ENCODE measurements at regions of chr14 and their contacts with region 1.

Region 1: DNA sequence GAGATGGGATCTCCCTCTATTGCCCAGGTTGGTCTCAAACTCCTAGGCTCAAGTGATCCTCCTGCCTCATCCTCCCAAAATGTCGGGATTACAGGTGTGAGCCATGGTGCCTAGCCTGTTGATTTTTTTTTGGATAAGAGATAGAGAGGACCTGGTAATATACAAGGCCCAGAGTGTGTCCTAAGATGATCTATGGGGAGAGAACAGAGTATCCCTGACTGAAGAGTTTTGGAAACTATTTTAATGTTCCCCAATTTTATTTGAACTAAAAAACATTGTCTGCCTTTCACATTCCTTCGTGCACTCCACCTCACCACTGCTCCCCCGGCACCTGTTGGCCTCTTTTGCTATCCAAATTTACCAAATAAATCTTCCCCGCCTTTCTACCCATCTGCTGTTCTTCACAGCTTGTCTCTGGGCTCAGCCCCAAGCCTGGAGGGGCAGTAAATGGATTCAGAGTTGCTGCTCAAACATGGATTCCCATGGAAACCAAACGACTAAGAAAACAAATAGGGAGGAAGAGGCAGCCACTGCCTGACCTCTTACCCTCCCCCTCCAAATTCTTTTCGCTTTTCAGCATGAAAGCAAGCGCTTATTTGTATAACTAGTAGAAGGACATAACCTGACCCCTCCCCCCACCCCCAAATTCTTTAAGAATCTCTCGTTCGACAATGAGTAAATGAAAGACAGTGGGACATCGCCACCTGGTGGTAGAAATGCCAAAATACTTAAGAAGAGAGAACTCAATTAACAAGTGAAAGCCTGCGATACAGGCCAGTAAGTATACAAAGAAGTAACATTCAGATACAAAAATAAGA is 22.6 kb downstream of the OR10G3 start:
- DNase-seq: peak; percentile 87
- ATAC-seq: peak; percentile 68
- H3K4me3 Mint-ChIP-seq: no peak overlapping the region
- H3K27ac Mint-ChIP-seq: no peak overlapping the region
- H3K4me1 Mint-ChIP-seq: peaks cover 4% of the 10 kb centered on the region
- H3K27me3 Mint-ChIP-seq: no peaks in the 10 kb centered on the region

Region 2: GRCh38 chr14:21241218-21241819 is 316.0 kb before region 1 on chr14:
- CTCF ChIA-PET with region 1: no interaction called
- POLR2A ChIA-PET with region 1: no interaction called
- intact Hi-C with region 1: loop called in 1 of 2 experiments (anchors 2 kb)
- DNase-seq: no peak
- ATAC-seq: no peak
- H3K4me3 Mint-ChIP-seq: no peak overlapping the region
- H3K27ac Mint-ChIP-seq: peak overlapping the region; percentile 75
- H3K4me1 Mint-ChIP-seq: peaks cover 77% of the 10 kb centered on the region
- H3K27me3 Mint-ChIP-seq: no peaks in the 10 kb centered on the region

Region 3: DNA sequence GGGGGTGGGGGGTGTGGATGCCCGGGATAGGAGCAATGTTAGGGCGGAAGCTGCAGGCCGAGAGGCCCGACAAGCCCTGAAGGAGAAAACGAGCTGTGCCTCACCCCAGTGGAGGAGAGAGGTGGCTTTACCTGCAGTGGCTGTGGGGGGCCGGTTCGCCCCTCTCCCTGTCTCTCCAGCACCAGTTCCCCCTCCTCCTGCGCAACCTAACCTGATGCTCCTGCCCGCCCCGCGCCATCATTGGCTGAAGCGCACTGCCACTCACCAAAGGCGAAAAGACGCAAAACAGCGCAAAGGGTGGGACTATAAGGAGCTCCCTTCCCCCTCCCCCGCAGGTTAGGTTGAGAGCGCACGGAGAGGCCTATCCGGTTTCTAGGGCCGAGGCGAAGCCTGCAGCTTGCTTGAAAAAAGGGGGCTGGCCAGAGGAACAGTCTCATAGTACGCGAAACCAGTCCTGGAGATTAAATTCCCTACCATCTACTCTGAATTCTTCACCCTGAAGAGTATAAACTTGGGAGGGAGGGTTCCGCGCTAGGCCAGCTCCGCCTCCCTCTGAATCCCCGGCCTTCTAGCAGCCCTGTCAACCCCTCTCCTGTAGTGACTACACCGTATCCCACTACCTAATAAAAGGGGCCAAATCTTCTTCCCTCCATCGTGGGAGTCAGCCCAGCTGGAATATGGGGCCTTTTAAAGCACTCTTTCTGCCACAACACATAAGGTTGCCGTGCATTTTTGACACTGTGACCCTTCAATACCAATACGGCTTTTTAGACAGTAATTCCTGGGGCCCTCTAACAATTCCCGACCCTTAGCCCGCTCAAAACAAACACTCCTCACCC is 120.0 kb before region 1 on chr14:
- CTCF ChIA-PET with region 1: interaction called, 4 read pairs
- POLR2A ChIA-PET with region 1: no interaction called
- intact Hi-C with region 1: loop called in 1 of 2 experiments (anchors 1 kb)
- DNase-seq: peak; percentile 99
- ATAC-seq: peak; percentile 99
- H3K4me3 Mint-ChIP-seq: peak overlapping the region; percentile 95
- H3K27ac Mint-ChIP-seq: peak overlapping the region; percentile 87
- H3K4me1 Mint-ChIP-seq: peaks cover 57% of the 10 kb centered on the region
- H3K27me3 Mint-ChIP-seq: no peaks in the 10 kb centered on the region

Region 4: GRCh38 chr14:21498553-21499526 is 58.5 kb before region 1 on chr14:
- CTCF ChIA-PET with region 1: interaction called, 49 read pairs
- POLR2A ChIA-PET with region 1: interaction called, 3 read pairs
- intact Hi-C with region 1: loop called (anchors 1 kb)
- DNase-seq: peak; percentile 22
- ATAC-seq: peak; percentile 78
- H3K4me3 Mint-ChIP-seq: no peak overlapping the region
- H3K27ac Mint-ChIP-seq: peak overlapping the region; percentile 64
- H3K4me1 Mint-ChIP-seq: peaks cover 23% of the 10 kb centered on the region
- H3K27me3 Mint-ChIP-seq: no peaks in the 10 kb centered on the region

Region 5: GRCh38 chr14:21525962-21526671 is 31.2 kb before region 1 on chr14 and contains the start of gene SALL2:
- CTCF ChIA-PET with region 1: interaction called, 4 read pairs
- POLR2A ChIA-PET with region 1: no interaction called
- intact Hi-C with region 1: loop called in 1 of 2 experiments (anchors 2 kb)
- DNase-seq: peak; percentile 87
- ATAC-seq: peak; percentile 87
- H3K4me3 Mint-ChIP-seq: peak within 1 kb of the TSS; percentile 71
- H3K27ac Mint-ChIP-seq: peak within 1 kb of the TSS; percentile 72
- H3K4me1 Mint-ChIP-seq: peaks cover 16% of the 10 kb centered on the region
- H3K27me3 Mint-ChIP-seq: no peaks in the 10 kb centered on the region
- total RNA-seq, gene SALL2: 5.5 to 6.3 TPM

Region 6: GRCh38 chr14:21572604-21573003 is 15.3 kb after region 1 on chr14:
- CTCF ChIA-PET with region 1: interaction called, 7 read pairs
- POLR2A ChIA-PET with region 1: no interaction called
- intact Hi-C with region 1: loop called (anchors 1 kb)
- DNase-seq: no peak
- ATAC-seq: no peak
- H3K4me3 Mint-ChIP-seq: no peak overlapping the region
- H3K27ac Mint-ChIP-seq: no peak overlapping the region
- H3K4me1 Mint-ChIP-seq: no peaks in the 10 kb centered on the region
- H3K27me3 Mint-ChIP-seq: peaks cover 6% of the 10 kb centered on the region

Region 7: GRCh38 chr14:21780429-21781084 is 223.3 kb after region 1 on chr14:
- CTCF ChIA-PET with region 1: no interaction called
- POLR2A ChIA-PET with region 1: no interaction called
- intact Hi-C with region 1: no loop called
- DNase-seq: no peak
- ATAC-seq: no peak
- H3K4me3 Mint-ChIP-seq: no peak overlapping the region
- H3K27ac Mint-ChIP-seq: no peak overlapping the region
- H3K4me1 Mint-ChIP-seq: no peaks in the 10 kb centered on the region
- H3K27me3 Mint-ChIP-seq: peaks cover 15% of the 10 kb centered on the region

Measured in activated CD4-positive, alpha-beta T cell treated with anti-CD3 and anti-CD28 coated beads for 36 hours (primary cell).